Stomach (tissue), 19 donors: ENCODE measurements at regions of chr12 and their contacts with region 1.

Region 1: GRCh38 chr12:96985480-96986362 is 78.7 kb downstream of the NEDD1 start:
- DNase-seq: peak; percentile 35 to 73
- H3K4me3 ChIP-seq: peak overlapping the region; percentile 45 to 63 (median 52)
- H3K27ac ChIP-seq: no peak overlapping the region
- H3K4me1 ChIP-seq: peaks cover 6 to 14% (median 11%) of the 10 kb centered on the region in 4 donors
- H3K27me3 ChIP-seq: peaks cover 0 to 17% (median 9%) of the 10 kb centered on the region in 3 donors
- CTCF ChIP-seq: peak in 5 of 7 experiments; percentile 8 to 81 (median 79)
- EP300 ChIP-seq: no peak
- POLR2A ChIP-seq: no peak

Region 2: DNA sequence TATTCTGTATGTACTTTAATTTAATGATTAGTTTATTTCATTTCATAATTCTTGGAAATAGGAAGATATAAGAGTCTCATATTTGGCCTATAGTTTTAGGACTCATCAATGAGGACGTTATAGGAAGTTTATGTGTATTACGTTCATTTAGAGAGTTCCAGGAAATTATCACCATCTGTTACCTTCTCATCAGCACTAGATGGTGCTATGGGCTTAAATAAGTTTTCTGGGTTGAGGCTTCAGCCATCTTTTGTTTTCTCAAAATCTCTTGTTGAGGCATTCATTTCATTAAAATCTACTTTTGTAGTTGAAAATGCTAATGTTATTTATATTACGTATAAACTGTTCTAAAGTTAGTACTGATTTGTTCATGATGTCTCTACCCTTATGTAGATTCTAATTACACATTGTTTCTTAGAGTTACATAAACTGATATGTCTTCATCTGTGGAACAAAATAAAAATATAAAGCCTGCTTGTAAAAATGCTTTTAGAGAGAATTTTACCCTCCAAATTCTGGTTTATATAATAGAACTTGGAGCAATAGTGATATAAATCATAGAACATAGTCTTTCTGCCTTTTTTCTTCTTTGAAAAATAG is 407.1 kb before region 1 on chr12:
- intact Hi-C with region 1: loop called (anchors 10 kb)
- DNase-seq: peak in 1 of 2 donors; percentile 78
- H3K4me3 ChIP-seq: no peak overlapping the region
- H3K27ac ChIP-seq: no peak overlapping the region
- H3K4me1 ChIP-seq: no peaks in the 10 kb centered on the region
- H3K27me3 ChIP-seq: no peaks in the 10 kb centered on the region
- CTCF ChIP-seq: peak in 3 of 7 experiments; percentile 32 to 49 (median 45)
- EP300 ChIP-seq: no peak
- POLR2A ChIP-seq: no peak

Region 3: GRCh38 chr12:96687719-96688118 is 298.0 kb before region 1 on chr12:
- intact Hi-C with region 1: no loop called
- DNase-seq: peak in 1 of 2 donors; percentile 20
- H3K4me3 ChIP-seq: no peak overlapping the region
- H3K27ac ChIP-seq: no peak overlapping the region
- H3K4me1 ChIP-seq: no peaks in the 10 kb centered on the region
- H3K27me3 ChIP-seq: no peaks in the 10 kb centered on the region
- CTCF ChIP-seq: no peak
- EP300 ChIP-seq: no peak
- POLR2A ChIP-seq: no peak